Heart right ventricle (tissue), 16 donors: ENCODE measurements at regions of chr3 and their contacts with region 1.

Region 1: GRCh38 chr3:120182724-120183524 is 88.7 kb upstream of the GSK3B start:
- DNase-seq: peak in 1 of 2 donors; percentile 21
- ATAC-seq: peak in 3 of 8 donors; percentile 35 to 44 (median 42)
- H3K4me3 ChIP-seq: no peak overlapping the region
- H3K27ac ChIP-seq: no peak overlapping the region
- H3K4me1 ChIP-seq: peaks cover 0 to 3% (median 0%) of the 10 kb centered on the region in 9 donors
- H3K27me3 ChIP-seq: no peaks in the 10 kb centered on the region
- CTCF ChIP-seq: peak in 8 of 9 donors; percentile 6 to 60 (median 48)

Region 2: GRCh38 chr3:119898478-119899191 is 284.3 kb before region 1 on chr3:
- intact Hi-C with region 1: loop called in 8 of 10 experiments (anchors 2 to 10 kb)
- DNase-seq: no peak
- ATAC-seq: no peak
- H3K4me3 ChIP-seq: no peak overlapping the region
- H3K27ac ChIP-seq: no peak overlapping the region
- H3K4me1 ChIP-seq: peaks cover 0 to 4% (median 0%) of the 10 kb centered on the region in 9 donors
- H3K27me3 ChIP-seq: no peaks in the 10 kb centered on the region
- CTCF ChIP-seq: no peak

Region 3: GRCh38 chr3:120137547-120137946 is 45.4 kb before region 1 on chr3:
- intact Hi-C with region 1: no loop called
- DNase-seq: no peak
- ATAC-seq: no peak
- H3K4me3 ChIP-seq: no peak overlapping the region
- H3K27ac ChIP-seq: no peak overlapping the region
- H3K4me1 ChIP-seq: no peaks in the 10 kb centered on the region
- H3K27me3 ChIP-seq: no peaks in the 10 kb centered on the region
- CTCF ChIP-seq: no peak